SK-N-SH (cell line): ENCODE measurements at regions of chr9 and their contacts with region 1.

Region 1: DNA sequence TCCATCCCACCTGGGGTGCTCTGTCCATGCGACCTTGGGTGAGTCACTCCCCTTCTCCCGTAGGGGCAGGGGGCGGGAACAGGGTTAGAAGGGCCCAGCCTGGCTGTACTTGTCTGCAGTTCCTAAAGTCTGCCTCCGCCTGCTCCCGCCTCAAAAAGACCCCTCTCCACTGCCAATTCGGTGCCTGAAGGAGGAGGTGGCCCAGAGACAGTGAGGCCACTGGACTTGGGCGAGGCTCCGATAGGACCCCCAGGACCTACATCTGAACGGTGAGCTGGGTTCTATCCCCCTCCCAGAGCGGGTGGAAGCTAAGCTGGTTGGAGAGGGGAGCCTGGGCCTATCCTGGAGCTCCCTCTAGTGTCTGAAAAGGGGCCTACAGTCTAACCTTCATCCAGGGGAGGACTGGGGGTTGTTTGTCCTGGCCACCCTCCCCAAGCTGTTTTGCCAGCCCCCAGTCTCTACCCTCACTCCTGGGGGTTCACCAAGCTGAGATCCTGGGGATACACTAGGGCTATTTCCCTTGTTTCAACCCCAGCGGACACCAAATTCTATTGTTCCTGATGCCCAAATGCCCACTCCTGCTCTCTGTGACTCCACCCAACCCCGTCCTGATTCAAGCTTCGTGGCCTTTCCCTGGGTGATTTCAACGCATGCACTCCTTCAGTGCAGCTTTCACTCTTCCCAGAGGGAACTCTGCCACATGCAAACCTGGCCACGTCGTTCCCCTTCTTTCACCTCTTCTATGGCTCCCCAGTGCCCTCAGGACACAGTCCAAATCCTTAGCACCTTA is 6.1 kb upstream of the CRB2 start:
- DNase-seq: peak; percentile 90
- H3K4me3 ChIP-seq: peak overlapping the region in 1 of 2 experiments; percentile 47; a peak in 1 of 4 replicates
- H3K27ac ChIP-seq: no peak overlapping the region
- H3K4me1 ChIP-seq: peaks cover 6 to 7% of the 10 kb centered on the region in 2 experiments; a peak in 2 of 4 replicates
- H3K27me3 ChIP-seq: peaks cover 6% of the 10 kb centered on the region
- CTCF ChIP-seq: peak; percentile 95
- EP300 ChIP-seq: no peak
- RAD21 ChIP-seq: peak; percentile 97

Region 2: DNA sequence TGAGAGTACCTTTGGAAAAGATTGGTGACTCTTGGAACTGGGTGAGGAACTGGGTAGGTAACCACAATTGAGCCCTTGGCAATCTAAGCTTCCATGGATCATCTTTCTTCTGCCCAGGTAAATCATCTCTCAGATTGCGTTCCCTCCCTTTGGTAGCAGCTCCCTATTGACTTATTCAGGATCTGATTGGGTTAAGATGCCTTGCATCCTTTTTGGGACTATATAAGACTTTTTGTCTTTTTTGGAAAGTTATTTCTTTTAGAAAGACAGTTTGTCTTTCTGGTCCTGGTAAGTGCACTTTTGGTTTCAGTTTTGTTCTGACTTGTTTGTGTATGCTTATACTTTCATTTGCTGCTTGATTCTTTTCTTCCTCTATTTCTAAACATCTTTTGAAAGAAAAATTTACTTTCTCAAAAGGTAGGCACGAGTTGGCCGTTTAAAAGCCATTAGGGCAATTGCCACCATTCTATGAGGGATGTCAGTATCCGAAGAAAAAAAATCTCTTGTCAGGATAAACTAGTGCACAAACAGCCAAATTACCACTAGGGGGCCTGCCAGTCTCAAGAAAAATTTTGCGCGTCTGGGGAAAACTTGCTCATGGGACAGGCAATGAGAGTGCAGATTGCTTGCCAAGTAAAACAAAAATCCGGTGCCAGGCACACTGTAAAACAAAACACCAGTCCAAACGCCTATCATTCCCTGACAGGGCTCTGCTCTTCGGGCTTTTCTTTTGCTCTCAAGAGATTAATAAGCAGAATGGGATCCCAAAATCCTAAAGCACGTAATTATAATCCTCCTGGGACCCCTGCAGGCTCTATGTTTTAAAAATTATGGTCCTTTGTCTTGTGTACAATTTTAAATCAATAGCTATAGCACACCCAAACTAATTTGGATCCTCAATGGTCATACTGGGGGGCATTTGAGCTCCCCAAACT is 885.0 kb before region 1 on chr9:
- CTCF ChIA-PET with region 1: interaction called, 19 read pairs
- POLR2A ChIA-PET with region 1: no interaction called
- DNase-seq: peak; percentile 52
- H3K4me3 ChIP-seq: peak overlapping the region; percentile 47 to 60
- H3K27ac ChIP-seq: peak overlapping the region in 1 of 2 experiments; percentile 7; a peak in 1 of 4 replicates
- H3K4me1 ChIP-seq: peaks cover 3 to 4% of the 10 kb centered on the region in 2 experiments; a peak in 2 of 4 replicates
- H3K27me3 ChIP-seq: no peaks in the 10 kb centered on the region
- CTCF ChIP-seq: peak; percentile 92
- EP300 ChIP-seq: 0 out of 4 replicates have a peak, but pooled peaks of 1 of the 2 experiments have one; percentile 9
- RAD21 ChIP-seq: peak; percentile 85

Region 3: GRCh38 chr9:123073991-123074422 is 275.9 kb before region 1 on chr9:
- CTCF ChIA-PET with region 1: interaction called, 37 read pairs
- POLR2A ChIA-PET with region 1: no interaction called
- DNase-seq: no peak
- H3K4me3 ChIP-seq: peak overlapping the region in 1 of 2 experiments; percentile 12; a peak in 1 of 4 replicates
- H3K27ac ChIP-seq: peak overlapping the region; percentile 75 to 79
- H3K4me1 ChIP-seq: peaks cover 0 to 22% of the 10 kb centered on the region in 2 experiments; a peak in 3 of 4 replicates
- H3K27me3 ChIP-seq: no peaks in the 10 kb centered on the region
- CTCF ChIP-seq: no peak
- EP300 ChIP-seq: peak; percentile 61 to 82; a peak in 3 of 4 replicates
- RAD21 ChIP-seq: no peak

Region 4: GRCh38 chr9:123091459-123091858 is 258.4 kb before region 1 on chr9:
- CTCF ChIA-PET with region 1: interaction called, 37 read pairs
- POLR2A ChIA-PET with region 1: no interaction called
- DNase-seq: no peak
- H3K4me3 ChIP-seq: no peak overlapping the region
- H3K27ac ChIP-seq: peak overlapping the region; percentile 67 to 69; a peak in 2 of 4 replicates
- H3K4me1 ChIP-seq: peaks cover 5 to 27% of the 10 kb centered on the region in 2 experiments; a peak in 3 of 4 replicates
- H3K27me3 ChIP-seq: no peaks in the 10 kb centered on the region
- CTCF ChIP-seq: peak; percentile 41
- EP300 ChIP-seq: no peak
- RAD21 ChIP-seq: no peak

Region 5: DNA sequence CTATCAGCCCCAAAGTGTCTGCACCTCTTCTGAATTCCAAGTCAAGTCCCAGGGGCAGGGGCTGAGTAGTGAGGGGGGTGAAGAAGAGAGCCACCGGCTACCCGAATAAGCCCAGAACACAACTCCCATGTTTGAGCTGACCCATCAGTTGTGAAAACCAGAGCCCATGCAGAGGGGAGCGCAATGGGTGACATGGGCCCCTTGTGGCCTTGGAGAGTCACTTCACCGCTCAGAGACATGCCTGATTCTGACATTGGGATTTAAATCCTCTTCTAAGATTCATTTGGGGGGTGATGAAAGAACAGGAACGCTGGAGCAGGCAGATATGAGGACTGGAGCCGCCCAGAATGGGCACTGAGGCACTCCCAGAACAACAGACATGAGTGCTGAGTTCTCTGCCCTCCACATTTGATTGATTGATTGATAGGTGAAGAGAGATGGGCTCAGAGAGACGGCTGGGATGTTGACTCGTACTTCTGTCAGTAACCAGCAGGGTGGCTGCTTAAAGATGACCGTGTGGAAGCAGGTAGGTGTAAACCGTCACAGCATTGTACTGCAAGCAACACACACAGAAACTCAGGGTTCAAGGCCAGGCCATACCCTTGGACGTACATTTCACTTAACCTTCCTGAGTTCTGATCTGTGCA is 242.1 kb before region 1 on chr9:
- CTCF ChIA-PET with region 1: interaction called, 21 read pairs
- POLR2A ChIA-PET with region 1: no interaction called
- DNase-seq: no peak
- H3K4me3 ChIP-seq: no peak overlapping the region
- H3K27ac ChIP-seq: no peak overlapping the region
- H3K4me1 ChIP-seq: no peaks in the 10 kb centered on the region; a peak in 1 of 4 replicates
- H3K27me3 ChIP-seq: no peaks in the 10 kb centered on the region
- CTCF ChIP-seq: no peak
- EP300 ChIP-seq: no peak
- RAD21 ChIP-seq: no peak

Region 6: DNA sequence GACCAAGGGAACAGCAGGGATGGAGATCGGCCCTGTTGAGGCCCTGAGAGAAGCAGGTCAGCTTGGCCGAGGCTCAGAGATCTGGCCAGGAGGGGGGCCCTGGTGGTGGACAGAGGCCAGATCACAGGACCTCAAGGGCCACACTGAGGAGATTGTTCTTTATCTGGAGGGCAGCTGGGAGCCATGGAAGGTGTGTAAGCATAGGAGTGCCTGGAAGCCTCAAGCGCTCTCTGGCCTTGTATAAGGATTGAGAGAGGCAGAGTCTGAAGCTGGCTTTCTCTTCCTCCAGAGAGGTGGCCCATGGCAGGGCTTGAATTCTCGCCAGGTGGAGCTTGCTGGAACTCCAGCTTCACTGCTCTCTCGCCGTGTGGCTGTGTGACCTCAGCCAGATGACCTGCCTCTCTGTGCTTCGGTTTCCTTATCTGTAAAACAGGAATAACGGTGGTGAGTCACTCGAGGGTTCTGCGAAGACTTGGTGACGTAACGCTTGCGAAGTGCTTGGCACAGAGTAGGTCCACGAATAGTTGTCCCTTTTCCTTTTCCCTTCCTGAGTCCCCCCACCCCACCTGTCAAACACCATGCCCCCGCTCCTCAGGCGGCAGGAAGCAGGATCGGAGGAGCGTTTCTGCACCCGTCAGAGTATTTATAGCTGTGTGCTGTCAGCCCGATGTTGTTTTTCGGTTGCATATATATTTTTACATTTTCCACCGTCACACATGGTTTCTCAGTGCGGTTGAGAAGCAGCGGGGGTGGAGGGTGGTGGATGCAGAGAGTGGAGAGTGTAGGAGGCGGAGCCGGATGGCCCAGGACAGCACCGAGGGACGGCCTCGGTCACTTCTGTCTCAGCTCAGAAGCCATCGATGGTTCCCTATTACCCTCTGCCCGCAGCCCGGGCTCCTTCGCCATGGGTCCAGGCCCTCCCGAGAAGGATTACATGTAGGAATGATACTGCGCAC is 10.9 kb before region 1 on chr9:
- CTCF ChIA-PET with region 1: interaction called, 38 read pairs
- POLR2A ChIA-PET with region 1: no interaction called
- DNase-seq: no peak
- H3K4me3 ChIP-seq: no peak overlapping the region
- H3K27ac ChIP-seq: no peak overlapping the region
- H3K4me1 ChIP-seq: peaks cover 0 to 7% of the 10 kb centered on the region in 2 experiments; a peak in 2 of 4 replicates
- H3K27me3 ChIP-seq: no peaks in the 10 kb centered on the region
- CTCF ChIP-seq: no peak
- EP300 ChIP-seq: no peak
- RAD21 ChIP-seq: no peak

Region 7: DNA sequence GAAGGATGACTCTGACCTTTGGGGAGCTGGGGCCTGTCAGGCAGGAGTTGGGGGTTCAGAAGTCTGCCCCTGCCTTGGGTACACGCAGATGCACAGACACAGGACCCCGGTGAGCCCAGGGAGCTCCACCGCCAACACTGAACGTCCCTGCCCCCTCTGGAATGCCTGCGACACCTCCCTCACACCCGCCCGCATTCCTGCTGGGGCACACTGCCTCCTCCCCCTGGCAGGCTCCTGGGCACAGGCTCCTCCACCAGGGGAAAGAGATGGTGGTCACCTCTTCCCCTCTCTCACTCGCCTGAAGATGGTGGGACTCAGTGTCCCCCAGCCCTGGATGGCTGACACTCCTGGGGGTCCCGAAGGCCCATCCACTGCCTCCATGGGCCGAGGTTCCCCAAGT is 18.1 kb after region 1 on chr9:
- CTCF ChIA-PET with region 1: interaction called, 77 read pairs
- POLR2A ChIA-PET with region 1: no interaction called
- DNase-seq: no peak
- H3K4me3 ChIP-seq: no peak overlapping the region
- H3K27ac ChIP-seq: no peak overlapping the region
- H3K4me1 ChIP-seq: peaks cover 0 to 2% of the 10 kb centered on the region in 2 experiments; a peak in 1 of 4 replicates
- H3K27me3 ChIP-seq: peaks cover 35% of the 10 kb centered on the region
- CTCF ChIP-seq: no peak
- EP300 ChIP-seq: no peak
- RAD21 ChIP-seq: no peak